ENCODE measurements at regions of chr1 and their contacts with region 1.

Region 1: DNA sequence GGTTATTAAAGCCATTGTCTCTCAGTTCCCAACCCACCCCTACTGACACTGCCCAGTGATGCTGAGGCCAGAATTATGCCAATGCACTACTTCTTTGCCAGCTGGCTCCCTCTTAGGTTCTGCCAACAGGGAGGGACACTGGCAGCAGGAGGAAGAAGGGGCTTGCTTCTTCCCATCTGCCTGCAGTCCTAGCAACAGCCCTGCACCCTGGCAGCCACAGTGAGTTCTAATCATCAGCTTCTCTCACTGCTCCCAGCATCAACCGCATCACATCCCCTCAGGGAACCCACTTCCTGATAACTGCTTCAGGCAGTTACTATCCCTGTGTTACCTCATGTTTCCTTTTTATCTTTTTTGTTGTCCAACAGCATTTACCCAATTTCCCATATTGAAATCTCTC is 86.2 kb downstream of the UBR4 start:
- DNase-seq: no peak
- ATAC-seq: peak in 1 of 4 donors; percentile 21
- H3K4me3 ChIP-seq: no peak overlapping the region
- H3K27ac ChIP-seq: no peak overlapping the region
- H3K4me1 ChIP-seq: no peaks in the 10 kb centered on the region
- H3K27me3 ChIP-seq: no peaks in the 10 kb centered on the region
- CTCF ChIP-seq: no peak

Region 2: GRCh38 chr1:19156676-19157075 is 32.8 kb after region 1 on chr1:
- intact Hi-C with region 1: loop called (anchors 5 kb)
- DNase-seq: peak in 1 of 2 donors; percentile 23
- ATAC-seq: peak in 3 of 4 donors; percentile 39 to 57 (median 52)
- H3K4me3 ChIP-seq: no peak overlapping the region
- H3K27ac ChIP-seq: no peak overlapping the region
- H3K4me1 ChIP-seq: no peaks in the 10 kb centered on the region
- H3K27me3 ChIP-seq: no peaks in the 10 kb centered on the region
- CTCF ChIP-seq: no peak

Region 3: DNA sequence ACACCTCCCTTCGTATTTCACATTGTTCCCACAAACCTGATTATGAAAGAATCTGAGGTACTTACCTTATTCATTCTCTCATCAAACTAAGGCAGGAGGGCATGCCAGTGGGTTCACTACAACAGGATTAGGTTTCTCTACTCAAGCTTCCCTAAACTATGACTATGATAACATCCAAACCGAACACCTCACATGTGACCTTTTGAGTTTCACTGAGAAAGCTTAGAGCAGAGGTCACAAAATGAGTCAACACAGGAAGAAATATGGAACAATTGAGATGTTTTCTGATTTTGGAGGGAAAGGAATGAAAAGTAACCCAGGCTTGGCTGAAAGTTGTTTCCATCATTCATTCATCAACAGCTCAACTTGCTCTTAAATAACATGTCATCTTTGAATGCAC is 62.2 kb after region 1 on chr1:
- intact Hi-C with region 1: loop called in 1 of 2 experiments (anchors 5 kb)
- DNase-seq: no peak
- ATAC-seq: no peak
- H3K4me3 ChIP-seq: no peak overlapping the region
- H3K27ac ChIP-seq: no peak overlapping the region
- H3K4me1 ChIP-seq: no peaks in the 10 kb centered on the region
- H3K27me3 ChIP-seq: no peaks in the 10 kb centered on the region
- CTCF ChIP-seq: no peak

Region 4: DNA sequence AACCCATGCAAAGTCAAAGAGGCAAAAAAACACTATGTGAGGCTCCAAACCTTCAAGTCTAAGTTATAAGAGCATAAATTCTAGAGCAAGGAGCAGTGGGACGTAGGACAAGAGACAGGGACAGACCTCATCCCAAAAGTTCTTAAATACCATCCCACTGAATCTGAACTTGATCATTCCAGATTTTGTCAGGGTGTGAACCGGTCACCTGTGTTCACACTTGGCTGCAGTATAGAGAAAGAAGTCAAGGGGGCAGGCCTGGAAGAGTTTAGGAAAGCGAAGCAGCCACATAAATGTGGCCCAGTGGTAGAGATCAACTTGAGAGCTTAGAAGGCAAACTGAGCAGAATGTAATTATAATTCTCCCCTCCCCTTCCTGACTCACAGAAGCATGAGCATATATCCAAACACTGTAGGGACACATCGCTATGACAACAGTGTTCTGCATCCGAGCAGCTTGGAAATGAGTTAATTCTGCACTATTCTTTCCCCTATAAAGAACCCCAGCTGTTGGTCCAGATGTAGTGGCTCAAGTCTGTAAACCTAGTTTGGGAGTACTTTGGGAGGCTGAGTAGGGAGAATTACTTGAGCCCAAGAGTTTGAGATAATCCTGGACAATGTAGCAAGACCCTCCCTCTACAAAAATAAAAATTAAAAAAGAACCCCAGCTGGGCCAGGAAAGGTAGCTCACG is 185.4 kb after region 1 on chr1:
- intact Hi-C with region 1: no loop called
- DNase-seq: no peak
- ATAC-seq: no peak
- H3K4me3 ChIP-seq: no peak overlapping the region
- H3K27ac ChIP-seq: no peak overlapping the region
- H3K4me1 ChIP-seq: peaks cover 20% of the 10 kb centered on the region
- H3K27me3 ChIP-seq: no peaks in the 10 kb centered on the region
- CTCF ChIP-seq: no peak